Activated CD4-positive, alpha-beta T cell treated with anti-CD3 and anti-CD28 coated beads for 36 hours (primary cell): ENCODE measurements at regions of chr4 and their contacts with region 1.

Region 1: DNA sequence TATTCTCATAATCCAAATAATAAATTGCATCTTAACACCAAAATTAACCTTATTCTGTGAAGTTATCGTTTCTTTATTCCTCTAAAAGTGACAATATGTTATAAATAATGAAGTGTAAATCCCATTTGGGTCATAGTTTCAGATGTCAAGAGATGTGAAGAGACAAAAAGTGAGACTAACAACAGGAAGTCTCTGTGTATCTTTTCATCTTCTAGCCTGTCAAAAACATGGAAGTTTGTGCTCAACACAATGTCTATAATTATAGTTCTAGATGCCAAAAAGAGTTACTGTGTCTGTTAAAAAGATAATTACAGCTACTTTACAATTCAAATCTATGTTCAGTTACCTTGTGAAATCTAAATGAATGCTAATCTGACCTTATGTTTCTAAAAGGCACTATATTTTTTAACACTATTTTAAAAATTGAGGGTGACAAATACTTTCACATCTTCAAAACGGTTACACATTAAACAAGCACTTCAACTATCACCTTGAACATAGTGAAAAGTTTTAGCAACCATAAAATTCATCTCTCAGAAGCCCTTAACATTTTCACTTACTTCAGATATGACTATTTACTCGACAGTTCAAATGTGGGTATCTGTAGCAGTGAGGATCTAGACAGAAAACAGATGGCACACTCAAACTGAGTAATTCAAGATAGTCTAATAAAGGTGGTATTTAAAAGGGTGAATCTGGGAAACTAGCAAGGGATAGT is 509.8 kb downstream of the ARAP2 start:
- DNase-seq: no peak
- ATAC-seq: no peak
- H3K4me3 Mint-ChIP-seq: no peak overlapping the region
- H3K27ac Mint-ChIP-seq: no peak overlapping the region
- H3K4me1 Mint-ChIP-seq: no peaks in the 10 kb centered on the region
- H3K27me3 Mint-ChIP-seq: no peaks in the 10 kb centered on the region

Region 2: GRCh38 chr4:35760807-35761206 is 26.3 kb after region 1 on chr4:
- CTCF ChIA-PET with region 1: no interaction called
- POLR2A ChIA-PET with region 1: no interaction called
- intact Hi-C with region 1: loop called in 1 of 2 experiments (anchors 1 kb)
- DNase-seq: no peak
- ATAC-seq: no peak
- H3K4me3 Mint-ChIP-seq: no peak overlapping the region
- H3K27ac Mint-ChIP-seq: no peak overlapping the region
- H3K4me1 Mint-ChIP-seq: no peaks in the 10 kb centered on the region
- H3K27me3 Mint-ChIP-seq: peaks cover 2% of the 10 kb centered on the region